CD8-positive, alpha-beta memory T cell (primary cell): ENCODE measurements at regions of chr14 and their contacts with region 1.

Region 1: DNA sequence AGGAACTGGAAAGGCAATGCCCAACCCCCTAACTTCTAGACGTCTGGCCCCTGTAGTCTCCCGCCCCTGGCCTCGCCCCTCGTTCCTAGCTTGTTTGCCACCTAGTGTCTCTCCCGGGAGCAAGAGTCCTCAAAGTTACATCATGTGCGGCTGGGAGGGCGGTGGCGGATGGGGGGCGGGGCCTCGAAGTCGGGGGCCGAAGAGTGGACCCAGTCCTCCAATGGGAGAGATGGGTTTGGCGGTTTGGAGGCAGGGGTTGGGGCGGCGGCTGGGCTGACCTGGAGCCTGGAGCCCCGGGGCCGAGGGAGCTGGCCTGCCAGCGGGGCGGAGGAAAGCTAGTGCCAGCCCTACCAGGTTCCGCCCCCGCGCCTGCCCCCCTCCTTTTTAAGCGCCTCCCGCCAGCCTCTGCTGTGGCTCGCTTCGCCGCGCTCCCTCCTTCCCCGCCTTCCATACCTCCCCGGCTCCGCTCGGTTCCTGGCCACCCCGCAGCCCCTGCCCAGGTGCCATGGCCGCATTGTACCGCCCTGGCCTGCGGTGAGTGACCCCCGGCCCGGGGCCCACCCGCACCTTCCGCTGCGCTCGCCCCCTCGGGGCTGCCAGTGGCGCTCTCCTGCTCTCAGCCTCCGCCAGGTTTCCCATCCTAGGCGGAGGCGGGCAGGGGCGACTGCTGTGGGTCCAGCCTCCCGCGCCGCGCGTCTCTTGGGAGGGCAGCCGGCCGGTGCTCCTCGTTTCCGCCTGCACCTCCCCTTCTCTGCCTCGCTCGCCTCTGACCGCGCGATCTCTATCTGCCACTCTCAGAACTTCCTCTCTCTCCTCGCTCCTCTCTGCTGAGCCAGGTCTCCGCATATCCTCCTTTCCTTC is at the start of gene PCK2:
- DNase-seq: peak; percentile 63 to 77 (median 67)
- H3K4me3 ChIP-seq: peak within 1 kb of the TSS; percentile 93
- H3K4me3 Mint-ChIP-seq: peak within 1 kb of the TSS; percentile 93 to 99 (median 97)
- H3K27ac ChIP-seq: peak within 1 kb of the TSS; percentile 83
- H3K27ac Mint-ChIP-seq: peak within 1 kb of the TSS; percentile 65 to 98 (median 95)
- H3K4me1 ChIP-seq: peaks cover 16% of the 10 kb centered on the region
- H3K4me1 Mint-ChIP-seq: peaks cover 28 to 37% (median 37%) of the 10 kb centered on the region in 3 donors
- H3K27me3 ChIP-seq: no peaks in the 10 kb centered on the region
- H3K27me3 Mint-ChIP-seq: no peaks in the 10 kb centered on the region
- total RNA-seq, gene PCK2: 79.6 to 88.3 TPM

Region 2: DNA sequence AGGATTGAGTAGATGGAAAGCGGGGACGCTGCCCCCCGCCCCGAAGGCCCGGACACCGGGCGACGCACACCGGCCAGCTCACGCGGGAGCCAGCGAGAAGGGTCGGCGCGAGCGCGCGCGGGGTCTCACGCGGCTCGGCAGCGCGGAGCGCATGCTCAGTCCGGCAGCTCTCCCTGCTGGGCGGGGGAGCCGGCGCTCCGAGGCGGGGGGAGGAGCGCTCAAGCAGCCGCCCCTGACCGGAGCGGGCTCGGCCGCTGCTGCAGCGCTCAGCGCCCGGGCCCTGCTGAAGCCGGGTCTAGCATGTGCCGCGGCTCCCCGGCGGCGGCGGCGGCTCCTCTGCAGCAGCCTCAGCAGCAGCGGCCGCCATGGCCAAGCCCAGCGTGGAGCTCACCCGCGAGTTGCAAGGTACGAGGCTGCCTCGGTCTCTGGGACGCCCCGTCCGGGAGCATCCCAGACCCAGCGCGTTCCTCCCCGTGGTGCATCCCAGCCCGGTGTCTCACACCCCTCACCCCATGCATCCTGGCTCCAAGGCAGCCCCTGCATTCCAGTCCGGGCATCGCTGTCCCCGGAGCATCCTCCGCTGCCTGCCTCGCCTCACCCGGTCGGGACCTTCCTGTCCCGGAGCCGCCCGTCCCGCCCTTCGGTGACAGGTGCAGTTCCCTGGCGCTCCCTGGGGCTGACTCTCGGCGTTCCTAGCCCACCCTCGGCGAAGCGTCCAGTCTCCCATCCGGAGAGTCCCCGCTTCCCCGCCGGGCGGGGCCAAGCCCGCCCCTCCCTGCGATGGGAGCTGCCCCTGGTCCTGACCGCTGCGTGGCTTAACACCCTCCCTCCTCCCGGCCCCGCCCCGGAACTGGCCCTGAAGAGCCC is 42.1 kb before region 1 on chr14 and contains the start of gene CARMIL3:
- CTCF ChIA-PET with region 1: interaction called, 114 read pairs
- POLR2A ChIA-PET with region 1: no interaction called
- DNase-seq: peak; percentile 49 to 73 (median 56)
- H3K4me3 ChIP-seq: peak within 1 kb of the TSS; percentile 66
- H3K4me3 Mint-ChIP-seq: peak within 1 kb of the TSS; percentile 78 to 90 (median 84)
- H3K27ac ChIP-seq: no peak within 1 kb of the TSS
- H3K27ac Mint-ChIP-seq: peak within 1 kb of the TSS in 6 of 8 donors; percentile 16 to 94 (median 58)
- H3K4me1 ChIP-seq: peaks cover 9% of the 10 kb centered on the region
- H3K4me1 Mint-ChIP-seq: peaks cover 15 to 20% (median 18%) of the 10 kb centered on the region in 3 donors
- H3K27me3 ChIP-seq: no peaks in the 10 kb centered on the region
- H3K27me3 Mint-ChIP-seq: peaks cover 0 to 8% of the 10 kb centered on the region in 2 donors
- total RNA-seq, gene CARMIL3: 1.2 to 1.5 TPM

Region 3: DNA sequence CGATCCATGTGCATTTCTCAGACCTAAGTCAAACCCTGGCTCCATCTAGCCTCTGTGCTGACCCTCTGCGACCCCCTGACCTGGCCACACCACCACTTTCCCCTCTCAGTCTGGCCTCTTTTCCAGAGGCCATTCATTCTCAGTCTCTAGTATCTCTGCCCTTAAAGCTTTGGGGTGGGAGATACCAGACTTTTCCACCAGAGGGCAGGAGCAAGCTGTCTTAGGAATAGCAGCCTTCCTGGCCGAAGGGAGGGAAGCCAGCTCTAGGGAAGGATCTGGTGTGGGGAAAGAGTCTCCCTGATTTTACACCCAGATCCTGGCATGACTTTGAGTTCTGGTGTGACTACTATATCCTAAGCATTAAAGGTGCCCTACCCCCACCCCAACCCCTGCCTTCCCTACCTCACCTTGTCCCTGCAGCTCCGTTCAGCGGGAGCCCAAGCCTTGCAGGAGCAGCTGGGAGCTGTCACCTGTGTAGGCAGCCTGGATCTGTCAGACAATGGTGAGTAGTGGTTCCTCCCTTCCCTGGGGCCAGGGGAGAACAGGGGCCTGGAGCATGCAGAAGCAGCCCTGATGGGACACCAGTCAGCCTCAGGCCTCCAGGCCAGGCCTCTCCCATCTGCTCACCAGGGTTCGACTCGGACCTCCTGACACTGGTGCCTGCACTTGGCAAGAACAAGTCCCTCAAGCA is 35.7 kb before region 1 on chr14:
- CTCF ChIA-PET with region 1: interaction called, 114 read pairs
- POLR2A ChIA-PET with region 1: no interaction called
- DNase-seq: peak; percentile 43 to 67 (median 52)
- H3K4me3 ChIP-seq: no peak overlapping the region
- H3K4me3 Mint-ChIP-seq: peak overlapping the region in 1 of 7 donors; percentile 22
- H3K27ac ChIP-seq: no peak overlapping the region
- H3K27ac Mint-ChIP-seq: peak overlapping the region in 3 of 8 donors; percentile 65 to 86 (median 85)
- H3K4me1 ChIP-seq: no peaks in the 10 kb centered on the region
- H3K4me1 Mint-ChIP-seq: peaks cover 3 to 8% (median 4%) of the 10 kb centered on the region in 3 donors
- H3K27me3 ChIP-seq: no peaks in the 10 kb centered on the region
- H3K27me3 Mint-ChIP-seq: peaks cover 0 to 1% of the 10 kb centered on the region in 2 donors

Region 4: DNA sequence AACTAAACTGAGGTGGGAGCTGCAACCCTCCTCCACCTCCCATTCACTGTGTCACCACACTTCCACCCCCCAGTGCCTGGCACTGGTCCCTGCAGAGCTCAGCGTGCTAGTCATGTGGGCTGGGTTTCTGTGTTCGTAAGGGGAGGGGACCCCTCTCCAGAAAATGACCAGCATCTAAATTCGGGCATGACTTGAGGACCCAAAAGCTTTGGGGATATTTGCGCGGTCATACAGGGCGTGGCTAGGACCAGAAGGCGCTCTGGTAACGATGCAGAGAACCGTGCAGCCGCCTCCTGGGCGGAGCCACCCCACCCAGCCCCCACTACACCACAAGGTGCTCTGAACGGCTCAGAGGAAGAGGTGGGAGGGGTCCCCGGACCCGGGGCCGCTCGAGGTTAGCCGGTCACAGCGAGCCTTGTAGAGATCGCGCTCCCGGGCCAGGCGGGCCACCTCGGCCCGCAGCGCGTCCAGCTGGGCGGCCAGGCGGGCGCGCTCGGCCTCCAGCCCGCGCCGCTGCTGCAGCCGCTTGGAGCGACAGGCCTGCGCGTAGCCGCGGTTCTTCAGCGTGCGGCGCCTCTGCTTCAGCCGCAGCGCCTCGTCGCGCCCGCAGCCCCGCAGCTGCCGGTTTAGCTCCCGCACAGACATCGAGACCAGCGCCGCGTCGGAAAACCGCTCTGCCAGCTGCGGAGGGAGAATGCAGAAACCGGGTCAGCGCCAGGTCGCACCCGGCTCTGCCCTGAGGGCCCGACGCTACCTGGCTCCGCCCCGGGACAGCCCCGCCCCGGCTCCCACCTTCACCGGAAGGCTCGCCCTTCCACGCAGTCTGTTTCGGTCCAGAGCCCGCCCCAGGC is 13.0 kb before region 1 on chr14:
- CTCF ChIA-PET with region 1: interaction called, 76 read pairs
- POLR2A ChIA-PET with region 1: interaction called, 7 read pairs
- DNase-seq: peak; percentile 36 to 80 (median 64)
- H3K4me3 ChIP-seq: peak overlapping the region; percentile 62
- H3K4me3 Mint-ChIP-seq: peak overlapping the region; percentile 85 to 93 (median 88)
- H3K27ac ChIP-seq: peak overlapping the region; percentile 61
- H3K27ac Mint-ChIP-seq: peak overlapping the region; percentile 53 to 92 (median 82)
- H3K4me1 ChIP-seq: peaks cover 9% of the 10 kb centered on the region
- H3K4me1 Mint-ChIP-seq: peaks cover 15 to 18% (median 16%) of the 10 kb centered on the region in 3 donors
- H3K27me3 ChIP-seq: no peaks in the 10 kb centered on the region
- H3K27me3 Mint-ChIP-seq: peaks cover 0 to 2% of the 10 kb centered on the region in 2 donors

Region 5: DNA sequence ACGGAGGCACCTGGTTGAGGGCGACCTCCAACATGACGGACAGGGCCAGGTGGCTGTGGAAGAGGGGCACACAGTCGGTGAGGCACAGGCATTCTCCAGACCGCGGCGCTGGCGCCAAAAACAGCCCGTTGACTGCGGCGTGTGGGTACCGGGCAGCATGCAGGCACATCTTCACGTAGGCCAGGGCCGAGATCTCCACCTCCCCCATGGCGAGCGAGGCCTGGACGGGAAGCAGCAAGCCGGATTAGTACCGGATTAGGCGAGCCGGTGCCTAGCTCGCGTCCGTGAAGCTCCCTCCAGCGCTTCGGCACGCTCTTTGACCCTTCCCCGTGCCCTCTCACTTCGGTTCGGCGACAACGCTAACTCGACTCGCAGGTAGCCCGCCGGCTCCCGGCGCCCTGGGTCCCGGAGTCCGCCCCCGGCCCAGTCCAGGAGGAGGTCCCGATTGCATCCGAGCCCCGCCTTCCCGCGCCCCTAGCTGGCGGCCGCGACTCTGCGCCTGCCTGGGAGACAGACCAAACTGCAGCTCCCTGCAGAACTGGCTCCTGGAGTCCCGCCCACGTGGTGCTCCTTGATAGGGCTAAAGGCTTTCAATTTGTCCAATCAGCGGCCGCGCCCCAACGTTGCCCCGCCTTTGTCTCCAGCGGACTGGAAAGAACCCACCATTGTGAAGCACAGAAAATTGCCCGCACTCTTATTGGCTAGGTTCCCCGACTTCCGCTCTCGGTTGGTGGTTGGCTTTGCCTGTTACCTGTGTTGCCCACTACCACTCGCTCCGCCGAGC is 47.2 kb after region 1 on chr14 and contains the start of gene EMC9:
- CTCF ChIA-PET with region 1: interaction called, 4 read pairs
- POLR2A ChIA-PET with region 1: interaction called, 14 read pairs
- DNase-seq: peak; percentile 98 to 100 (median 99)
- H3K4me3 ChIP-seq: peak within 1 kb of the TSS; percentile 85
- H3K4me3 Mint-ChIP-seq: peak within 1 kb of the TSS; percentile 87 to 98 (median 91)
- H3K27ac ChIP-seq: peak within 1 kb of the TSS; percentile 68
- H3K27ac Mint-ChIP-seq: peak within 1 kb of the TSS; percentile 80 to 98 (median 90)
- H3K4me1 ChIP-seq: peaks cover 56% of the 10 kb centered on the region
- H3K4me1 Mint-ChIP-seq: peaks cover 65 to 86% (median 79%) of the 10 kb centered on the region in 3 donors
- H3K27me3 ChIP-seq: no peaks in the 10 kb centered on the region
- H3K27me3 Mint-ChIP-seq: no peaks in the 10 kb centered on the region
- total RNA-seq, gene EMC9: 28.1 to 30.2 TPM